ENCODE measurements at regions of chr9 and their contacts with region 1.

Region 1: DNA sequence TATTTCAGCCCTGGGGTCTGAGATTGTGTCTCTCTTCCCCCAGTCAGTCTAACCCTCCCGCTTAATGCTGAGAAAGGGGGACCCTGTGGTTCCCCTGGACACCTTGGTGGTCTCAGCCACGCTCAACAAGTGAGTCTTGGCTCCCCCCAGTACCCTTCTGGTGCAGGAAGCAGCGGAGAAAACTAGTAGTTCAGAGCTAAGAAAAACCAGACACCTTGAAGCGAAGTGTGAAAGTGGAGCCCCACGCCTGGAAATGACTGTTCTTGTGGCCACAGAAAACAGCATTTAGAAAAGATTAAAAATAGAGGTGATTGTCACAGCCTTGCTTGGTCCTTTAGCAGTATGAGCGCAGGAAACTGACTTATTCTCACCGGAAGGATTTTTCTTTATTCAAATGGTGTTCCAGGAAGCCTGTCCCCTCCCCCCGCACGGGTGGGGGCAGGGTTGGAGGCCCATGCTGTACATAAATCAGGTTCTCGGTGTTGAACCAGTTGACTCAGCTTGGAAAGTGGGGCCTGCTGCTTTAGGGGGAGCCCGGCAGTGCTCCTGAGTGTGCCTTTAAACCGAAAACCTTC is 8.1 kb downstream of the ARPC5L start:
- DNase-seq: peak; percentile 84 to 90
- ATAC-seq: peak; percentile 70 to 84 (median 70)
- H3K4me3 ChIP-seq: peak overlapping the region; percentile 96
- H3K4me3 Mint-ChIP-seq: peak overlapping the region; percentile 97
- H3K27ac ChIP-seq: peak overlapping the region; percentile 96
- H3K27ac Mint-ChIP-seq: peak overlapping the region; percentile 97
- H3K4me1 ChIP-seq: peaks cover 65% of the 10 kb centered on the region
- H3K4me1 Mint-ChIP-seq: peaks cover 60% of the 10 kb centered on the region in 2 donors
- H3K27me3 ChIP-seq: no peaks in the 10 kb centered on the region
- H3K27me3 Mint-ChIP-seq: no peaks in the 10 kb centered on the region
- CTCF ChIP-seq: no peak

Region 2: DNA sequence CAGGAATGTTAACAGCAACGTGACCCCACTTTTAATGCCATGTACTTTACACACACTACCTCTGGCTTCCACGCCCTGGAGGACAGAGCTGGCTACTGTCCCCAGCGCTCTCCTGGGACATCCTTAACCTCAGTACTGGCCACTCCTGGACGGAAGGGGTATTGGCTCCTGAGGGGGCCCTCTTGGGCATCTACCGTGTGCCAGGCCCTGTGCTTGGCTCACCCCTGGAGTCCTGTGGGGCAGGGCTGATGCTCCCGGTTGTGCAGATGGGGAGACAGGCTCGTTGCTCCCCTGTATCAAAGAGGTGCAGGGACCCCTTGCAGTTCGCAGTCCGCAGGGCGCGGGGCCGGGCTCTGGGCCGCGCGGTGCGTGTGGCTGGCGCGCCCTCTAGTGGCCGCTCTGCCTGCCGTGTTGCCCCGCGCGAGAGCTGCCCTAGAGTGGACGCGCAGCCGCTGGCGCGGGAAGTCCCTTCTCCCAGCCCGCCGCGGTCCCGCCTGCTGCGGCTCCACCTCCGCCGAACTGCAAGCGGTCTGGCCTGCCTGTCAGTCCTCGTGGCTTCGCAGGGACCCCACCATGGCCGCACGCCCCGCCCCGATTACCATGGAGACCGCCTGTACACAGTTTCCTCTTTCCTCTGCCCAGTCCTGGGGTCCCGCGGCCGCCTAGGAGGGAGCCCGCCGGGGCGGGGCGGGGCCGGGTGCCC is 17.1 kb before region 1 on chr9 and contains the start of gene WDR38:
- intact Hi-C with region 1: loop called (anchors 1 kb)
- DNase-seq: peak; percentile 88 to 93
- ATAC-seq: peak; percentile 90 to 96 (median 95)
- H3K4me3 ChIP-seq: peak within 1 kb of the TSS; percentile 27
- H3K4me3 Mint-ChIP-seq: peak within 1 kb of the TSS; percentile 82
- H3K27ac ChIP-seq: peak within 1 kb of the TSS; percentile 87
- H3K27ac Mint-ChIP-seq: peak within 1 kb of the TSS; percentile 86 to 89
- H3K4me1 ChIP-seq: peaks cover 23% of the 10 kb centered on the region
- H3K4me1 Mint-ChIP-seq: peaks cover 13 to 24% of the 10 kb centered on the region in 2 donors
- H3K27me3 ChIP-seq: peaks cover 3% of the 10 kb centered on the region
- H3K27me3 Mint-ChIP-seq: no peaks in the 10 kb centered on the region
- CTCF ChIP-seq: peak; percentile 99
- total RNA-seq, gene WDR38: not detected

Region 3: GRCh38 chr9:124940693-124941453 is 70.8 kb after region 1 on chr9 and contains the start of gene GOLGA1:
- intact Hi-C with region 1: loop called (anchors 1 kb)
- DNase-seq: peak; percentile 92 to 97
- ATAC-seq: peak; percentile 85 to 97 (median 88)
- H3K4me3 ChIP-seq: peak within 1 kb of the TSS; percentile 98
- H3K4me3 Mint-ChIP-seq: peak within 1 kb of the TSS; percentile 97
- H3K27ac ChIP-seq: peak within 1 kb of the TSS; percentile 98
- H3K27ac Mint-ChIP-seq: peak within 1 kb of the TSS; percentile 91 to 95
- H3K4me1 ChIP-seq: peaks cover 14% of the 10 kb centered on the region
- H3K4me1 Mint-ChIP-seq: peaks cover 22 to 24% of the 10 kb centered on the region in 2 donors
- H3K27me3 ChIP-seq: no peaks in the 10 kb centered on the region
- H3K27me3 Mint-ChIP-seq: no peaks in the 10 kb centered on the region
- CTCF ChIP-seq: no peak
- total RNA-seq, gene GOLGA1: 21.5 to 32.4 (median 27.0) TPM